ENCODE measurements at regions of chr12 and their contacts with region 1.

Region 1: DNA sequence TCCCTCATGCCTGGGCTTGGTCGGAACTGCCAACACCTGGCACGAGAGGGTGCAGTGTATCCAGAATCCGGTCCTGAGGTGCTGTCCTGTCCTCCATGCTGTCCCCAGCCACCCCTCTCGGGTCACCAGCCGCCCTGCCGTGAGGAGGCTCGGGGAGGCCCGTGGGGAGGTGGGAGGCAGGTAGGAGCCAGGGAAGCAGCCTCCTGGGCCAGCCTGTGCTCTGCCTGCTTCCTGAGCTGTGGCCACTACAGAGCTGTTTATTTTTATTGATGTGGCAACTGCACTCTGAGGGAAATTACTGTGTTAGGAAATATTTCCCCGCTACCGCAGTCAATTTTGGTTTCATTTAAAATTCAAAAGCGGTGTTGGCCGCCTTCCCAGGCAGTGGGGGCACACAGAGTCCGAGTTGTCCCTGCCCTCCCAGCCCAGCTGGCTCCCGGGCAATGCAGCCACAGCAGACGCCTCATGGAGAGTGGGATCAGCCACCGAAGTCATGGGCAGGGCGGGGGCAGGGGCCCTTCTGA is 18.3 kb downstream of the NOC4L start:
- DNase-seq: peak; percentile 37 to 61
- H3K4me3 ChIP-seq: peak overlapping the region in 1 of 3 donors; percentile 5
- H3K27ac ChIP-seq: peak overlapping the region in 1 of 3 donors; percentile 6
- H3K4me1 ChIP-seq: peaks cover 10 to 17% of the 10 kb centered on the region in 2 donors
- H3K27me3 ChIP-seq: no peaks in the 10 kb centered on the region
- CTCF ChIP-seq: no peak
- POLR2A ChIP-seq: no peak

Region 2: GRCh38 chr12:132253698-132254480 is 91.3 kb after region 1 on chr12:
- intact Hi-C with region 1: loop called (anchors 10 kb)
- DNase-seq: no peak
- H3K4me3 ChIP-seq: no peak overlapping the region
- H3K27ac ChIP-seq: peak overlapping the region in 1 of 3 donors; percentile 22
- H3K4me1 ChIP-seq: peaks cover 0 to 3% of the 10 kb centered on the region in 2 donors
- H3K27me3 ChIP-seq: no peaks in the 10 kb centered on the region
- CTCF ChIP-seq: no peak
- POLR2A ChIP-seq: no peak